Activated T-helper 2 cell treated with anti-CD3 and anti-CD28 coated beads, Interferon-gamma antibody, Interleukin-2, Interleukin-4, amounts not matched to agents 10 μg/mL and 5 μg/mL and 100 μg/mL, durations not matched to agents 14 hours and 24 hours and 36 hours (primary cell): ENCODE measurements at regions of chr6 and their contacts with region 1.

Region 1: DNA sequence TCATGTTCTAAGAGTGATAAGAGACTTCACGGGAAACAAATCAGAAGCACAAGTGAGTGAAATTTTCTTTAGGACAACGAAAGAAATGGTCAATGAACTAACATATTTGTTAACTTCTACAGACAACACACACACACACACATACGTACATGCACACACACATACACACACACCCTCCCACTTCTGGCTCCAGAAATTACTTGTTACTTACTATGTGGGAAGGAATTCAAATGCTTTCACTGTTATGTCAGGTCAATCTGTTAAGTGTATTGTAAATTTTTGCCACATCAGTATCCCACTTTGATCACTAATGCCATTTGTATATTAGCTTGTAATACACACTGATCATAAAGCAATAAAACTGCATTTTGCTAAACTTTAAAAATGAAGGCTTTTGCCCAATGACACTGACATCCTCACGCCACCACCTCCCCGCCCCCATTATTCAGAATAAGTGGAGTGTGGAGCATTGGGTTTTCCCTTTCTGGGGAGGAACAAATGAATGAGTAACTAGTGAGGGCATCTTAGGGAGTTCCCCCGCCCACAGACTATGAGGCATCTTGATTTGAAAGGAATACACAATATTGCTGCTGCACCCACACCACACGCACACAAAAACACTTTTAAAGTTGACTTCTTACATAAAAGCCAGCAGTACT is 76.2 kb downstream of the ATXN1 start:
- DNase-seq: peak; percentile 49
- H3K4me3 Mint-ChIP-seq: no peak overlapping the region
- H3K27ac Mint-ChIP-seq: peak overlapping the region; percentile 86
- H3K4me1 Mint-ChIP-seq: peaks cover 83% of the 10 kb centered on the region
- H3K27me3 Mint-ChIP-seq: no peaks in the 10 kb centered on the region

Region 2: DNA sequence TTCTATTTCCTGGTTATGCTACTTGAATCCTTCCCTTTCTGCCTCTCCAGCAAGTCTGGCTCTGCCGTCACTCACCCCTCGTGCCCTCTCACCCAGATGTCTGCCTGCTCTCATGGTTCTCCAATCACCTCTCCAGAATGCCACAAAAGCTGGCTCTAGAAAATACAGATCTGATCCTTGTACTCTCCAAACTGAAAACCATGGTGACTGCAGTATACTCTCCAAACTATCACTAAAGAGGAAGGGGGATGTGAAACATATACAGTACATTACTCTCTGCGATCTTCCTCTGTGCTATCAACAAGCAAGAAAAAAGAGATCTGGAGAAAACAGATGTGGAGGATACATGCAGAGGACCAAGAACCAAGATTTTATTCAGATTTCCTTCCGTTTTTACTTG is 14.8 kb before region 1 on chr6:
- intact Hi-C with region 1: loop called (anchors 1 kb)
- DNase-seq: no peak
- H3K4me3 Mint-ChIP-seq: peak overlapping the region; percentile 50
- H3K27ac Mint-ChIP-seq: peak overlapping the region; percentile 89
- H3K4me1 Mint-ChIP-seq: peaks cover 74% of the 10 kb centered on the region
- H3K27me3 Mint-ChIP-seq: no peaks in the 10 kb centered on the region